Heart right ventricle (tissue), 16 donors: ENCODE measurements at regions of chr12 and their contacts with region 1.

Region 1: DNA sequence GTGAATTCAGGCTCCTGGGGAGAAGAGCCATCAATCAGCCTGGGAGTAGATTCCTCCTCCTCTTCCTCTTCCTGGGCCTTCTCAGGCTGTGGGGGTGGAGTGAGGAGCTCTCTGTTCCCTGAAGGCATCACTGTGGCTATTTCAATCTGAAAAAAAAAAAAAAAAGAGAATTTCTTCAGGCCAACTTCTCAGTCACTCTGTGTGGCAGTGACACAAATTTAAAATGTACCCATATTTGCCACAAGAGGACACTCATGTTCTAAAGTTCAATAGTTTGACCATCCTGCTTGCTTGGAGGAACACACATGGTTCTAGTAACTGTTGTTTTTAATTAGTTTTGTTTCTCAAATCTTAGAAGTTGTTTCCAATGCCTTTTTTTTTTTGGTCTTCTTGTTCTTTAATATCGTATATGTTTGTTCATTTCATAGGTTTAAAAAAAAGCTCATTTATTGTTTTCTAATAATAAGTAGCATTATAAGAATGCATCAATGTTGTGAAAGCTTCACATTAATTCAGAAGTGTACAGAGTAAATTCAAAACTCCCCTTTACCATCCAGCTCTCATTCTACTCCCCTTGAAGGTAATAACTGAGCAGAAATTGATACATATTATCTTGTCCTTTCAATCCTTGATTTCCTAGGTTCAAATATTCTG is 23.3 kb upstream of the CCER1 start:
- DNase-seq: peak in 1 of 2 donors; percentile 15
- ATAC-seq: peak; percentile 52 to 84 (median 79)
- H3K4me3 ChIP-seq: no peak overlapping the region
- H3K27ac ChIP-seq: peak overlapping the region in 5 of 10 donors; percentile 5 to 61 (median 32)
- H3K4me1 ChIP-seq: peaks cover 0 to 7% (median 0%) of the 10 kb centered on the region in 9 donors
- H3K27me3 ChIP-seq: no peaks in the 10 kb centered on the region
- CTCF ChIP-seq: peak; percentile 8 to 85 (median 65)

Region 2: DNA sequence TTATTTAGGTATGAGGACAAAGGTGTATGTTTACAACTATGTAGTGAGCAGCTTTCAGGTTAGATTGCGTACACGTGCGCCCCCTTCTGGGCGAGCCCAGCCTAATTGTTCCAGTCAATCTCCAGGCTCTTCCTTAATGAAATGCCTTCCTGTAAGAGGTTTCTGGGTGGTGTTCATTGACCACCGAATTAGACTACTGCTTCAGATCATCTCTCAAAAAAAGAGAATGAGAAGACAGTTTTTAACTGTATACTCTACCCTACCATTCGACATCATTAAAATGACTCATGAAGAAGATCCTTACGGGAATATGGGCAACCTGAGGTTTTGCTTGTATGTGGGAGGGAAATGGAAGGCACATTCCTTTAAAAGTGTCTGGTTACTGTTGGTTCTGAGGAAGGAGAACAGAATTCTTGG is 130.9 kb after region 1 on chr12:
- intact Hi-C with region 1: loop called in 7 of 10 experiments (anchors 2 to 5 kb)
- DNase-seq: peak; percentile 58 to 75
- ATAC-seq: peak in 7 of 8 donors; percentile 75 to 83 (median 80)
- H3K4me3 ChIP-seq: peak overlapping the region in 7 of 10 donors; percentile 32 to 49 (median 44)
- H3K27ac ChIP-seq: peak overlapping the region in 8 of 10 donors; percentile 34 to 73 (median 60)
- H3K4me1 ChIP-seq: no peaks in the 10 kb centered on the region
- H3K27me3 ChIP-seq: no peaks in the 10 kb centered on the region
- CTCF ChIP-seq: peak; percentile 22 to 81 (median 69)

Region 3: GRCh38 chr12:91178139-91178561 is 199.9 kb after region 1 on chr12:
- intact Hi-C with region 1: loop called in 2 of 10 experiments (anchors 10 kb)
- DNase-seq: no peak
- ATAC-seq: peak in 7 of 8 donors; percentile 40 to 71 (median 66)
- H3K4me3 ChIP-seq: peak overlapping the region in 9 of 10 donors; percentile 29 to 52 (median 45)
- H3K27ac ChIP-seq: peak overlapping the region; percentile 30 to 84 (median 76)
- H3K4me1 ChIP-seq: peaks cover 0 to 7% (median 0%) of the 10 kb centered on the region in 9 donors
- H3K27me3 ChIP-seq: no peaks in the 10 kb centered on the region
- CTCF ChIP-seq: peak in 8 of 9 donors; percentile 14 to 65 (median 46)

Region 4: DNA sequence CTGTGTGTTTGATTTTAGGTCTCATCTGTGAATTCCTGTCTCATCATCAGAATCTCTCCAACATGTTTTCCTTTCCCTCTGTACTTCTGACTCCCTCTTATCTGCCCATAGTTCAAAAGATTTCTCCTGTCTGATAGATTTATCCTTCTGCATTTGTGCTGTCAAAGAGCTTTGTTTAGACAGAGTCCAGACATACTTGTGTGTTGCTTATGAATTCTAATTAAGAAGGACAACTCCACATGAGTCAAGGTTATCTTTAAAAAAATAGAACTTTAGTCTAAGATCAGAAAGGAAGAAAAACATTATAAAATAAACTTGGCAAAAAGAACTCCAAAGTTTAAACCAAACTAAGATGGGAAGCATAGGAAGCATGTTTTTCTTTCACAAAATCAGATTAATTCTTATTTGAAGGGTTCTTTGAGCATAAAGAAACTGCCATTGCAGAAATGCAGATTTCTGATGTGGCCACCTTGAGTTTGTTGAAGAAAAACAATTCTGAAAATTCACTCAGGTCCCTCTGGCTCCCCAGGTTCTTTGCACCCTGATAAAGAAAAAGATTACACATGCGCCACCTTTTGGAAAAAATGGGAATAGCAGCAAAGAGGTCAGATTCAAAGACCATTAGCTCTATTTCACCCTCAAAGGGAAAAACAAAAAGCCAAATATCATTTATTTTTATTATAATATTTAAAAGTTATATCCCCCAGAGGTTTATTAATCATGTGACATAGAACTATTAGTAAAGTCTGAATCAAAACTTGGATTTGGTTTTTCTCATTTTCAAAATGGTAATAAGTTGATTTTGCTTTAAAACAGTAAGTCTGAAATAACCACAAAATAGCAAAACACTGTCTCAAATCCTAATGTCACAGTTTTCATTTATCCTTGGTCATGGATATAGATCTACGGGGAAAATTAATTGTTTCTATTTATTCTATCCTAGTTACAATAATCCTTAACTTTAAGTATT is 348.1 kb after region 1 on chr12:
- intact Hi-C with region 1: loop called in 8 of 10 experiments (anchors 2 to 10 kb)
- DNase-seq: peak in 1 of 2 donors; percentile 67
- ATAC-seq: peak in 5 of 8 donors; percentile 42 to 75 (median 69)
- H3K4me3 ChIP-seq: peak overlapping the region in 2 of 10 donors; percentile 14 to 18
- H3K27ac ChIP-seq: peak overlapping the region in 9 of 10 donors; percentile 4 to 73 (median 63)
- H3K4me1 ChIP-seq: peaks cover 0 to 6% (median 0%) of the 10 kb centered on the region in 9 donors
- H3K27me3 ChIP-seq: no peaks in the 10 kb centered on the region
- CTCF ChIP-seq: peak; percentile 61 to 86 (median 78)

Region 5: GRCh38 chr12:91332302-91332701 is 354.1 kb after region 1 on chr12:
- intact Hi-C with region 1: loop called in 8 of 10 experiments (anchors 2 to 10 kb)
- DNase-seq: no peak
- ATAC-seq: no peak
- H3K4me3 ChIP-seq: no peak overlapping the region
- H3K27ac ChIP-seq: no peak overlapping the region
- H3K4me1 ChIP-seq: no peaks in the 10 kb centered on the region
- H3K27me3 ChIP-seq: no peaks in the 10 kb centered on the region
- CTCF ChIP-seq: peak in 5 of 9 donors; percentile 9 to 40 (median 35)

Region 6: DNA sequence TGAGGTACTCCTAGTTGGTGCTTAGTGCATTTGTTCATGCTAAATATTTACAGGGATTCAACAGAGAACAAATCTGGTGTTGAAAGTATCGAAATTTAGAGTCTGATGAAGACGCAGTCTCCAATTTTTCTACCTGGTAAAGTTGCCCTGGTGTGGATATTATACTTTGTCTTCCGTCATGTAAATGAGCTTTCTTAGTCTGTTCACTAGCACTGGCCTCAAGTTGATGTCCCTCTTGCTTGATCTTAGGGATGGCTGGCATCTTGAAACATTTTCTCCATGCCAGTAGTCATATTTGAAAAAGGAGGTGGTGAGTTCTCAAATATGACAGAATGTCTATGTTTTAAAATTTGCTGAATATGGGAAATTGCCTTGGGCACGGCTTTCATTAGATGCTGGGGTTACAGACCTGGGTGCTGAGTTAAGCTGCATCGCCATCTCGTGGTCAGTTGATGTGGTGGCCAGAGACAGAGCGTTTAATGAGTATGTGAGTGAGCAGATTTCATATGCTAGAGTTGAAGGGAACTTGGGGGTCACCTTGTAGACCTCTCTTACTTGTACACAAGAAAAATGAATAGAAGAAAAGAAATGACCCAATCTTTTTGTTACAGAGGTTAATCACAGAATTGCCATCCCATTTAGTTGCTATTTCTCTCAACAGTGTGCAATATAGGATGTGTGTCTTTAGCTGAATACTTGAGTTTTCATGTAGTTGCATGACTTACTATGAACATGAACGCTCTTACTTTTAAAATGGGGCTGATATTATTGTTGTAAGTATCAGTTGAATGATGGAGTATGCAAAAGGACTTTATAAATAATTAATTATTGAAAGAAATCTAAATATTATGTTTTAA is 377.1 kb after region 1 on chr12:
- intact Hi-C with region 1: loop called in 9 of 10 experiments (anchors 1 to 10 kb)
- DNase-seq: peak; percentile 37 to 62
- ATAC-seq: peak; percentile 82 to 92 (median 88)
- H3K4me3 ChIP-seq: no peak overlapping the region
- H3K27ac ChIP-seq: no peak overlapping the region
- H3K4me1 ChIP-seq: no peaks in the 10 kb centered on the region
- H3K27me3 ChIP-seq: no peaks in the 10 kb centered on the region
- CTCF ChIP-seq: peak; percentile 53 to 87 (median 77)